Activated naive CD4-positive, alpha-beta T cell treated with anti-CD3 and anti-CD28 coated beads, Interleukin-2, amount 10 ng/mL, durations not matched to agents 7 days and 5 days (primary cell): ENCODE measurements at regions of chr2 and their contacts with region 1.

Region 1: GRCh38 chr2:28566521-28567041 is 70.7 kb downstream of the PLB1 start:
- DNase-seq: peak; percentile 91
- H3K4me3 Mint-ChIP-seq: peak overlapping the region; percentile 81
- H3K27ac Mint-ChIP-seq: peak overlapping the region; percentile 84
- H3K4me1 Mint-ChIP-seq: peaks cover 37% of the 10 kb centered on the region
- H3K27me3 Mint-ChIP-seq: peaks cover 21% of the 10 kb centered on the region

Region 2: GRCh38 chr2:28583899-28584553 is 17.4 kb after region 1 on chr2:
- CTCF ChIA-PET with region 1: interaction called, 13 read pairs
- DNase-seq: peak; percentile 47
- H3K4me3 Mint-ChIP-seq: no peak overlapping the region
- H3K27ac Mint-ChIP-seq: peak overlapping the region; percentile 49
- H3K4me1 Mint-ChIP-seq: peaks cover 66% of the 10 kb centered on the region
- H3K27me3 Mint-ChIP-seq: peaks cover 8% of the 10 kb centered on the region

Region 3: DNA sequence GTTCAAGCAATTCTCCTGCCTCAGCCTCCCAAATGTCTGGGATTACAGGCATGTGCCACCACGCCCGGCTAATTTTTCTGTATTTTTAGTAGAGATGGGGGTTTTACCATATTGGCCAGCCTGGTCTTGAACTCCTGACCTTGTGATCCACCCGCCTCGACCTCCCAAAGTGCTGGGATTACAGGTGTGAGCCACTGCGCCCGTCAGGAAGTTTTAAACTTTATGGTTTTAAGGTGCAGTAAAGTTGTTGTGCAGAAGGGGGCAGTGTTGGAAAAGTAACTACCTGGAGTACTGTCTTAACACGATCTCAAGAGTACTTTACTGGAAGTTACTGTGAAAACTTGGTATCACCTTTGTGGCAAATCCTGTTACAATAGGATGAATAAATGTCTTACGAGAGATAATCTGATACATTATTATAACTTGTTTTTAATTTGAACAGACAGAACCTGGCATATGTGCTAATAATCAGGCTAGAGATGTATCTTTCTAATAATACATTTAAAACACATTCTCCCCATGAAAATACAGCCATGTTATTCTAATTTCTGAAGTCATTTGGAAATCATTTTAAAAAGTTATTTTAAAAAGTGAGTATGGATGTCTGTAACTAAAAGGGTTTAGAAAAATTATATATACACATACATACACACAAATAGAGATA is 254.8 kb after region 1 on chr2:
- CTCF ChIA-PET with region 1: interaction called, 13 read pairs
- DNase-seq: peak; percentile 70
- H3K4me3 Mint-ChIP-seq: no peak overlapping the region
- H3K27ac Mint-ChIP-seq: no peak overlapping the region
- H3K4me1 Mint-ChIP-seq: no peaks in the 10 kb centered on the region
- H3K27me3 Mint-ChIP-seq: peaks cover 12% of the 10 kb centered on the region